T-cell (primary cell): ENCODE measurements at regions of chr17 and their contacts with region 1.

Region 1: DNA sequence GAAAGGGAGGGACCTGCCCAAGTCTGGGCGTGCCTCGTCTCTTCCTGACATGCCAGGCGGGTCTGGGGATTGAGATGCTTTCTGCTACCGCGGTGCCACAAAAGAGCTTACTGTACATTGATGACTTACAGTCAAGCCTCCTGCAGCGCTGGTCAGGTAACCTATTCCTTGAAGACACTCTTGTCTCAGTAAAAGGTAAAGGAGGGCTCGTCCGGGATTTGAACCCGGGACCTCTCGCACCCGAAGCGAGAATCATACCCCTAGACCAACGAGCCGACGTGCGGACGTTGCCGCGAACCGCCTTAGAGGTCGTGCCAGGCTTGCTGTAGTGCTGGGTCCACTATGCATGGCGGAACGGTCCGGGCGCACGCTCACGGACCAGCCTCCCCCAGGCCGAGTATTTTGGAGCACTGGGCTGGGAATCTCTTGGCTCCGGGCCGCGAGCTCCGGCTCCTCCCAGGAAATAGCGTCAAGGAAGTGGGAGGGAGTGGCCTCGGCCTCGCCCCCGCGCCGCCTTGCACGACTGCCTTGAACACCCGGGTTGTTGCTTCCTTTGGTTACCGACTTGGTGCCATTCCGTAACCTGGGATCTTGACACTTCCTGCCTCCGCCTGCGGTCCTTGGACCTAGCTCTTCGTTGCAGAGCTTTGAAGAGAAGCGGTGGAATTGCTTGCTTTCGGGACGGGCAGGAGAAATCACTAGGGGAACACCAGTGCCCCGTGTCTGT is 12.4 kb upstream of the AURKB start:
- DNase-seq: peak; percentile 75 to 92 (median 84)
- ATAC-seq: peak; percentile 57 to 59 (median 58)
- H3K4me3 ChIP-seq: peak overlapping the region; percentile 91 to 93
- H3K4me3 Mint-ChIP-seq: peak overlapping the region; percentile 87 to 94 (median 92)
- H3K27ac ChIP-seq: peak overlapping the region; percentile 96
- H3K27ac Mint-ChIP-seq: peak overlapping the region; percentile 95 to 98
- H3K4me1 ChIP-seq: peaks cover 14 to 73% of the 10 kb centered on the region in 2 experiments
- H3K4me1 Mint-ChIP-seq: peaks cover 61 to 73% (median 69%) of the 10 kb centered on the region in 3 donors
- H3K27me3 ChIP-seq: no peaks in the 10 kb centered on the region
- H3K27me3 Mint-ChIP-seq: peaks cover 0 to 9% of the 10 kb centered on the region in 2 donors

Region 2: GRCh38 chr17:8173056-8173870 is 49.5 kb before region 1 on chr17:
- CTCF ChIA-PET with region 1: no interaction called
- POLR2A ChIA-PET with region 1: interaction called in 1 of 2 experiments, 17 read pairs
- DNase-seq: peak in 33 of 35 experiments; percentile 55 to 94 (median 77)
- ATAC-seq: peak; percentile 82 to 85 (median 82)
- H3K4me3 ChIP-seq: peak overlapping the region; percentile 54 to 57
- H3K4me3 Mint-ChIP-seq: peak overlapping the region; percentile 76 to 86 (median 81)
- H3K27ac ChIP-seq: peak overlapping the region; percentile 99
- H3K27ac Mint-ChIP-seq: peak overlapping the region; percentile 100
- H3K4me1 ChIP-seq: peaks cover 22 to 49% of the 10 kb centered on the region in 2 experiments
- H3K4me1 Mint-ChIP-seq: peaks cover 46 to 56% (median 55%) of the 10 kb centered on the region in 3 donors
- H3K27me3 ChIP-seq: no peaks in the 10 kb centered on the region
- H3K27me3 Mint-ChIP-seq: no peaks in the 10 kb centered on the region

Region 3: DNA sequence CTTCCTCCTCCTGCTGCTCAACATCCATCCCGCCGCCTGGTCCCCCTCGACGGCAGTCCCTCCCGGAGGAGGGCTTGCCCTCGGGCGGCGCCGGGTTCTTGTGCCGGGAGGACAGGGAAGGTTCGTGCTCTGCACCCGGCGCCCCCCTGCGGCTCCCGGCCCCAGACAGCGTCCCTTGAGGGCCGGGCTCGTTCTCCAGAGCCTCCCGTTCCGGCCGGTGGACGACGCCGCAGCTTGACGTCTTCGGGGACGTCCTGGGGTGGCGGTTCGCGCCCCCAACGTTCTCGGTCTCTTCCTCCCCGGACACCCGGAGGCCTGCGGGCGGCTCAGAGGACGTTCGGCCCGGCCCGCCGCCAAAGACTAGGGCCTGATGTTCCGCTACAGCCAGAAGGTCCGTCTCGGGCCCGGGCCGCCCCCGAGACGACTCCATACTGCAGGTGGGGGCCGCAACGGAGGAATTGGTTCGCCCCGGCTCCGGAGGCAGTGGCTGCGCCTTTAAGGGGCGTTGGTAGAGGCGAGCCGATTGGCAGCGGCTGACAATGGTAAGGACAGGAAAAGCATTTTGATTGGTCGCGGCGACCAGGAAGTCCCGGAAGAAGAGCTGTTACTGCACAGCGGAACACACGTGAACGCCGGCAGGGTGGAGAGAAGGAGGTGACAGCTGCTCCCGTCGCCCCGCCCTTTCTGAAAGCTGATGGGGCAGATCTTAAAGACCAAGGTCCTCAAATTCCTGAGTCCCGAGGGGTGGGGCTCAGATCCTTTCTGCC is 32.9 kb before region 1 on chr17 and contains the start of gene BORCS6:
- CTCF ChIA-PET with region 1: interaction called, 3 to 12 read pairs
- POLR2A ChIA-PET with region 1: interaction called, 6 to 15 read pairs
- DNase-seq: peak; percentile 78 to 98 (median 95)
- ATAC-seq: peak; percentile 70 to 75 (median 72)
- H3K4me3 ChIP-seq: peak within 1 kb of the TSS; percentile 74 to 77
- H3K4me3 Mint-ChIP-seq: no peak within 1 kb of the TSS
- H3K27ac ChIP-seq: peak within 1 kb of the TSS; percentile 89
- H3K27ac Mint-ChIP-seq: peak within 1 kb of the TSS; percentile 91 to 93
- H3K4me1 ChIP-seq: peaks cover 28 to 68% of the 10 kb centered on the region in 2 experiments
- H3K4me1 Mint-ChIP-seq: peaks cover 0 to 13% (median 11%) of the 10 kb centered on the region in 3 donors
- H3K27me3 ChIP-seq: no peaks in the 10 kb centered on the region
- H3K27me3 Mint-ChIP-seq: no peaks in the 10 kb centered on the region
- total RNA-seq, gene BORCS6: 6.7 to 21.3 (median 17.2) TPM

Region 4: DNA sequence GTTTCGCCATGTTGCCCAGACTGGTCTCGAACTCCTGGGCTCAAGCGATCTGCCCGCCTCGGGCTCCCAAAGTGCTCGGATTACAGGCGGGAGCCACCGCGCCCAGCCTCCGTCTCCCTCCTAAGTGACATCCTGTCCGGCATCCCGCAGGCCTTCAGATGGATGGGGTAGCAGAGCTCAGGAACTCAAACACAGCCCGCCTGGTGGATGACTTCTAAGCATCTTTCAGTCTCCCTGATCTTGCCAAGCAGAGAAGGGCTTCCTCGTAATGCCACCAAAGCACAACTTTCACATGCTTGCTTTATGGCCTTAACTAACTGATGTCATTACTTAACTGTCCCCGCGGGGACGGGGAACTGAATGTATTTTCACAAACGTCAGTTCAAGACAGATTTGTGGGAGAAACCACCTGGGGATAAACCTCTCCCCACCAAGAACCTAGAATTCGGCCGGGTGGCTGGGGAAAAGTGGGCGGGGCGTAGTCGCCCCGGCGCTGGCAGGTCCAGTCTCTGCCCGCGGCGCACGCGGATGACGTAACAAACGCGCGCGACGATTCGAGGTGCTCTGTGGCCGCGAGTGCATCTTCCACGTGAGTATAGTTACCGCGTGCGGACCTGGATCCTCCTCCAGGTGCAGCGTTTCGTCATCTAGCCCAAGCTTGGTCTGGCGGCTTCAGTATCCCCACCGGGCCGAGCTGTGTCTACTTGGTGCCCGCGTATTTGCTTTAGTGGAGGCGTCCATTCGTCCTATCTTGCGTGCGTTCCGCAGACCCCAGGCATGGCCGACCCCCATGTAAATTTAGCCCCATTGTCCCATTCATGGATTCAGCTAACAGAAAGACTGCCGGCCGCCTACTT is 26.2 kb after region 1 on chr17 and contains the start of gene PFAS:
- CTCF ChIA-PET with region 1: interaction called in 1 of 2 experiments, 10 read pairs
- POLR2A ChIA-PET with region 1: interaction called, 4 to 14 read pairs
- DNase-seq: peak; percentile 85 to 98 (median 93)
- ATAC-seq: peak; percentile 42 to 64 (median 61)
- H3K4me3 ChIP-seq: peak within 1 kb of the TSS; percentile 81 to 91
- H3K4me3 Mint-ChIP-seq: peak within 1 kb of the TSS; percentile 99 to 100 (median 99)
- H3K27ac ChIP-seq: peak within 1 kb of the TSS; percentile 99
- H3K27ac Mint-ChIP-seq: peak within 1 kb of the TSS; percentile 97 to 98
- H3K4me1 ChIP-seq: peaks cover 22 to 46% of the 10 kb centered on the region in 2 experiments
- H3K4me1 Mint-ChIP-seq: peaks cover 48 to 63% (median 48%) of the 10 kb centered on the region in 3 donors
- H3K27me3 ChIP-seq: no peaks in the 10 kb centered on the region
- H3K27me3 Mint-ChIP-seq: no peaks in the 10 kb centered on the region
- total RNA-seq, gene PFAS: 31.5 to 52.4 (median 37.8) TPM

Region 5: DNA sequence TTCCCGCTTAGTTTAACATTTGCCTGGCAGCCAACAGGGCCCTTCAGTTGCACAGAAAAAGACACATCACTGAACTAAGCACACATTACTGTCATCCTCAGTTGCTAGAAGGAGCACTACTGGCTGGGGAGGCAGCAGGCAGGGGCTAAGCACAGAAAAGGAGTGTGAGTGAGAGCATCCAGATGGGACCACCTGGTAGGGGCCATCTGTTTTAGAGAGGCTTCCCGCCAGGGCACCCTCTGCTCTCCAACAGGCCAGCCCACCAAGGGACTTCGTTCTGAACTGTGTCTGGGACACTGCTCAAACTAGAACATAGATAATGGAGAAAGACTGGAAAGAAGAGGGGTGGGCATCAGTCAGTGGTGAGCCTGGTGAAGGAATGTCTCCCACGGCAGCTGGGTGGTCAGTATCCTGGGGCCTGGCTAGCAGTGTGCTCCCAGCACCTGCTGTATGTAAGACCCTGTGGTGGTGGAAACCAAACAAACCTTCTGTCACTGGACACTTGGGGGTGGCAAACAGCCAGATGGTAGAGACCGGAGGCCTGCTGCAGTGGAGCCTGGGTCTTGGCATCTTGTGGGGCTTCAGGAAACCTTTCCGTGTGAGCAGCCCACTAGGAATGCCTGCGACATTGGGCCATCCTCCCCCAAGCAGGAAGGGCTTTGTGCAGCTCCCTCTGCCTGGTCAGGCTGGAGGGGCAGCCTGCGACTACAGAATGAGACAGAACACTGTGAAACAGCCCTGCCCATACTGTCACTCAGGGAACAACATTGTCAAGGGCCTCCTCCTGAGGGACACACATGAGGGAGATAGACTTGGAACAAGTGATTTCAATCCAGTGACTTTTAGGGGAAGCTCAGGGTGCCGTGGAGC is 52.9 kb after region 1 on chr17:
- CTCF ChIA-PET with region 1: no interaction called
- POLR2A ChIA-PET with region 1: no interaction called
- DNase-seq: no peak
- ATAC-seq: no peak
- H3K4me3 ChIP-seq: no peak overlapping the region
- H3K4me3 Mint-ChIP-seq: no peak overlapping the region
- H3K27ac ChIP-seq: no peak overlapping the region
- H3K27ac Mint-ChIP-seq: no peak overlapping the region
- H3K4me1 ChIP-seq: no peaks in the 10 kb centered on the region
- H3K4me1 Mint-ChIP-seq: no peaks in the 10 kb centered on the region
- H3K27me3 ChIP-seq: no peaks in the 10 kb centered on the region
- H3K27me3 Mint-ChIP-seq: no peaks in the 10 kb centered on the region

Region 6: DNA sequence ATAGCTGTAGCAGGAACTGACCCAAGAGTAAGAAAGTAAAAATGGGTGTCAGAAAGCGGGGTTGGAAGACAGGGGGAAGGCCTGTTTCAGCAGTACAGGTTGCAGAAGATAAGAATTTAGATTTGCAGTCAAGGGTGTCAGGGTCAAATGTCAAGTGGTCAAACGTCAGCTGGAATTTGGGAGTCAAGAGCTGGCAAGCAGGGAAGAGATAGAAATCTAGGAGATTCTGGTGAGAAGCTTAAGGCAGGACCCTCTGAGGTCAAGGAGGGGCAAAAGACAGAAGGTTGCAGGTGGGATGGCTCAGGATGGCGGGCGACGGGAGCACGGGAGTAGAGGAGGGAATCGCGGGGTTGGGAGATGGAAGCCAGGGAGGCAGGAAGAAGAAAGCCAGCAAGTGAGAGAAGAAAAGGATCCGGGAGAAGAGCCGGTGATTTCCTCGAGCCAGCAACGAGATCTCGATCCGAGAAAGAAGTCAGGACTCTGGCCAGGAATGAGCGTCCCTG is 72.1 kb after region 1 on chr17:
- CTCF ChIA-PET with region 1: interaction called in 1 of 2 experiments, 13 read pairs
- POLR2A ChIA-PET with region 1: interaction called, 5 to 6 read pairs
- DNase-seq: no peak
- ATAC-seq: no peak
- H3K4me3 ChIP-seq: peak overlapping the region; percentile 81 to 88
- H3K4me3 Mint-ChIP-seq: peak overlapping the region; percentile 85 to 97 (median 88)
- H3K27ac ChIP-seq: peak overlapping the region; percentile 72
- H3K27ac Mint-ChIP-seq: peak overlapping the region; percentile 94
- H3K4me1 ChIP-seq: peaks cover 5 to 25% of the 10 kb centered on the region in 2 experiments
- H3K4me1 Mint-ChIP-seq: peaks cover 32 to 42% (median 39%) of the 10 kb centered on the region in 3 donors
- H3K27me3 ChIP-seq: no peaks in the 10 kb centered on the region
- H3K27me3 Mint-ChIP-seq: no peaks in the 10 kb centered on the region

Region 7: DNA sequence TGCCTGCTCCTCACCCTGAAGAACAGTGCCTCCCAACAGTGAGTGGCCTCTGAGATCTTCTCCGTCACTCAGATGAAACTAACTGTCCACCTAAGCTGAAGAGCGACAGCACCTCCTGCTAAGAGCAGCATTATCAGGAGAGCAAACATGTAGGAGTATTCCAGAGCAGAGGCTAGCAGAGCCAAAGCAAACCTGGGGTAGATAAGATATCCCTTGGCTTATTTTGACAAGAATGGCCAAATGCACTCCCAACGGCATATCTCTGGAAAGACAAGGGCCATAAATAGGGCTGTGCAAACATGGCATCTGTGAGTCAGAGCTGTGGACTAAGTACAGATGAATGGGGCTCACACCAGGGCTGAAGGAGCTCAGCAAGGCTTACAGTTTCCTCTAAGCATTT is 309.2 kb after region 1 on chr17:
- CTCF ChIA-PET with region 1: no interaction called
- POLR2A ChIA-PET with region 1: no interaction called
- DNase-seq: no peak
- ATAC-seq: no peak
- H3K4me3 ChIP-seq: no peak overlapping the region
- H3K4me3 Mint-ChIP-seq: no peak overlapping the region
- H3K27ac ChIP-seq: no peak overlapping the region
- H3K27ac Mint-ChIP-seq: no peak overlapping the region
- H3K4me1 ChIP-seq: no peaks in the 10 kb centered on the region
- H3K4me1 Mint-ChIP-seq: no peaks in the 10 kb centered on the region
- H3K27me3 ChIP-seq: peaks cover 0 to 3% of the 10 kb centered on the region in 2 experiments
- H3K27me3 Mint-ChIP-seq: no peaks in the 10 kb centered on the region